MCF 10A (cell line): ENCODE measurements at regions of chr12 and their contacts with region 1.

Region 1: DNA sequence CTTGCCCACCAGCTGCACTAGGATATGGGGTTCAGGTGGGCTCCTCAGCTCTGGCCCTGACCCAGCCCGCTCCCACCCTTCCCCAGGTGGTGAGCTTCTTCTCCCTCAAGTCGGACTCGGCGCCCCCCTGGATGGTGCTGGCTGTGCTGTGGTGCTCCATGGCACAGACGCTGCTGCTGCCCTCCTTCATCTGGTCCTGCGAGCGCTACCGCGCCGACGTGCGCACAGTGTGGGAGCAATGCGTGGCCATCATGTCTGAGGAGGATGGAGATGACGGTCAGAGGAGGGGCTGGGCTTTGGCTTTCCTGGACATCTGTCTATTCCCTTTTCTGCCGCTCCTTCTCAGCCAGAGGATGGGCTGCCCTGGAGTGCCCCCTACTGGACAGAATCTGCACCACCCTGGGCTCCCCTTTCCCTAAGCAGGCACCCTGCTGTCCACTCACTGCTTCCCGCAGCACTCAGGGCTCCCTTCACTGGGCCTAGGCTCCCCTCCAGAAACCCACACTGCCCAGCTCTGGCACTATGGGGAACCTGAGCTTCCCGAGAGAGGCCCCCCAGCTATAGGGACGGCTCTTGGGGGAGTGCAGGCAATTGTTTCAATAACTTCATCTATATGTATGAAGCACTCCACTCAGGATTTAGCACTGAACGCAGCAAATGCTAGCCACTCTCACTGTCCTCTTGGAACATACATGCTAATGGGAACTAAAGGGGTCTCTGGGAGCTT is 2.6 kb upstream of the P3H3 start:
- DNase-seq: peak; percentile 84
- H3K4me3 Mint-ChIP-seq: no peak overlapping the region
- H3K27ac Mint-ChIP-seq: no peak overlapping the region
- H3K4me1 Mint-ChIP-seq: peaks cover 29% of the 10 kb centered on the region
- H3K27me3 Mint-ChIP-seq: peaks cover 99% of the 10 kb centered on the region
- CTCF ChIP-seq: peak; percentile 90

Region 2: GRCh38 chr12:6613776-6614512 is 211.6 kb before region 1 on chr12:
- CTCF ChIA-PET with region 1: interaction called, 6 read pairs
- POLR2A ChIA-PET with region 1: no interaction called
- intact Hi-C with region 1: loop called (anchors 1 kb)
- DNase-seq: peak; percentile 86
- H3K4me3 Mint-ChIP-seq: no peak overlapping the region
- H3K27ac Mint-ChIP-seq: peak overlapping the region; percentile 90
- H3K4me1 Mint-ChIP-seq: peaks cover 32% of the 10 kb centered on the region
- H3K27me3 Mint-ChIP-seq: no peaks in the 10 kb centered on the region
- CTCF ChIP-seq: no peak

Region 3: DNA sequence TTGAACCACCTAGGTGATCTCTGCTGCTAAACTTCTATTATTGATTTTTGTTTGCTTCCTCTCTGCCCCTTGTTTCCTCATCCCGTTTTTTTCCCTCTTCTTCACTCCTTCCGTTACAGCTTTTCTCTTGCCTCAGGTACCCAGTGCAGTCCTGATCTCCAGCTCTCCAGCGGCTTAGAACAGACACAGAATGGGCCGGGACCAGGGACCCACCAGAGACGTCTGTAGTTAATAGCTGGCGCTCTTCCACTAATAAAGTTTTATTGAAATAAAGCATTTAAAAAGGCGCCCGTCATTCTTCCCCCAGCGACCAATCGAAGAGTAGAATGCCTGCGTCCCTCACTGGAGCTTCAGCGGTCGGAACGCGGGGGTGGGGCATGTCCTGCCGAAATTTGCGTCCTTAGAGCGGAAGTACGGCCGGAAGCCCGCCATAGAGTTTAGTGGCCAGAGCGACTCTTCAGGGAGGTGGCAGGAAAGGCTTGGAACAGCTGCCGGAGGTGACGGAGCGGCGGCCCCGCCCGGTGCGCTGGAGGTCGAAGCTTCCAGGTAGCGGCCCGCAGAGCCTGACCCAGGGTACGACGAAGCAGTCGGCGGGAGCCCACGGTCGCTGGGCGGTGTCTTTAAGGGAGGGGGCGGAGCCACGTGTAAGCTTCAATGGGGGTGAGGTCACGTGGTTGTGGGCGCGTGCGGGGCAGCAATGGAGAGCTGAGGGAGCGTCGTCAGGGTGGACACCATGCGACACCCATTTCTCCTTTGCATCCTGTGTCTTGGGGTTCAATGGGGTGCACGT is 101.8 kb before region 1 on chr12 and contains the start of gene COPS7A:
- CTCF ChIA-PET with region 1: interaction called, 10 read pairs
- POLR2A ChIA-PET with region 1: no interaction called
- intact Hi-C with region 1: no loop called
- DNase-seq: peak; percentile 99
- H3K4me3 Mint-ChIP-seq: peak within 1 kb of the TSS; percentile 70
- H3K27ac Mint-ChIP-seq: peak within 1 kb of the TSS; percentile 83
- H3K4me1 Mint-ChIP-seq: no peaks in the 10 kb centered on the region
- H3K27me3 Mint-ChIP-seq: no peaks in the 10 kb centered on the region
- CTCF ChIP-seq: no peak
- total RNA-seq, gene COPS7A: 55.5 and 61.3 TPM in 2 replicates

Region 4: GRCh38 chr12:6735448-6736191 is 89.9 kb before region 1 on chr12:
- CTCF ChIA-PET with region 1: interaction called, 5 read pairs
- POLR2A ChIA-PET with region 1: interaction called, 3 read pairs
- intact Hi-C with region 1: loop called (anchors 1 kb)
- DNase-seq: peak; percentile 85
- H3K4me3 Mint-ChIP-seq: peak overlapping the region; percentile 34
- H3K27ac Mint-ChIP-seq: peak overlapping the region; percentile 14
- H3K4me1 Mint-ChIP-seq: peaks cover 9% of the 10 kb centered on the region
- H3K27me3 Mint-ChIP-seq: no peaks in the 10 kb centered on the region
- CTCF ChIP-seq: peak; percentile 57

Region 5: DNA sequence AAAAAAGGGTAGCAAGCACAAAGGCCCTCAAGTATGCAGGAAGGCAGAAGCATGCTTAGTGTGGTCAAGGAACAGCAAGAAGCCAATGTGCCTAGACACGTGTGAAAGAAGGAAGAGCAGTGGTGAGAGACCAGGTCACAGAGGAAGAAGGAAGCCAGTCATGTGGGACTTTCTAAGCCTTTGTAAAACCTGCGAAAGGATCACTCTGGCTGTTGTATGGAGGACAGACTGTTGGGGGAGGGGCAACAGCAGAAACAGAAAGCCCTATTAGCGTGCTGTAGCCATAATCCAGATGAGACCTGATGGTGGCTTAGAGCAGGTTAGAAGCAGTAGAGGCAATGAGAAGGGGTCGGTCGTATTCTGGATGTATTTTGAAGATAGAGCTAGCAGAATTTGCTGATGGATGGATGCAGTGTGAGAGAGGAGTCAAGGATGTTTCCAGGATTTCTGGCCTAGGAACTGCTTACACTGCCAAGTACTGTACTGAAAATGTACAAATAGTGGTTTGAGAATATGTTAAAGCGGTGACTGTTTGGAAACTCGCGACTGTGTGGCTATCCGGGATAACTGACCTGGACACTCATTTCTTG is 67.0 kb before region 1 on chr12:
- CTCF ChIA-PET with region 1: interaction called, 74 read pairs
- POLR2A ChIA-PET with region 1: interaction called, 3 read pairs
- intact Hi-C with region 1: loop called (anchors 1 kb)
- DNase-seq: no peak
- H3K4me3 Mint-ChIP-seq: no peak overlapping the region
- H3K27ac Mint-ChIP-seq: no peak overlapping the region
- H3K4me1 Mint-ChIP-seq: peaks cover 12% of the 10 kb centered on the region
- H3K27me3 Mint-ChIP-seq: no peaks in the 10 kb centered on the region
- CTCF ChIP-seq: no peak

Region 6: GRCh38 chr12:6810758-6811157 is 14.8 kb before region 1 on chr12:
- CTCF ChIA-PET with region 1: interaction called, 14 read pairs
- POLR2A ChIA-PET with region 1: interaction called, 4 read pairs
- intact Hi-C with region 1: no loop called
- DNase-seq: no peak
- H3K4me3 Mint-ChIP-seq: no peak overlapping the region
- H3K27ac Mint-ChIP-seq: no peak overlapping the region
- H3K4me1 Mint-ChIP-seq: no peaks in the 10 kb centered on the region
- H3K27me3 Mint-ChIP-seq: peaks cover 47% of the 10 kb centered on the region
- CTCF ChIP-seq: no peak

Region 7: GRCh38 chr12:7656121-7656520 is 830.6 kb after region 1 on chr12:
- CTCF ChIA-PET with region 1: no interaction called
- POLR2A ChIA-PET with region 1: no interaction called
- intact Hi-C with region 1: no loop called
- DNase-seq: no peak
- H3K4me3 Mint-ChIP-seq: no peak overlapping the region
- H3K27ac Mint-ChIP-seq: no peak overlapping the region
- H3K4me1 Mint-ChIP-seq: no peaks in the 10 kb centered on the region
- H3K27me3 Mint-ChIP-seq: peaks cover 11% of the 10 kb centered on the region
- CTCF ChIP-seq: no peak